ENCODE measurements at regions of chr17 and their contacts with region 1.

Region 1: DNA sequence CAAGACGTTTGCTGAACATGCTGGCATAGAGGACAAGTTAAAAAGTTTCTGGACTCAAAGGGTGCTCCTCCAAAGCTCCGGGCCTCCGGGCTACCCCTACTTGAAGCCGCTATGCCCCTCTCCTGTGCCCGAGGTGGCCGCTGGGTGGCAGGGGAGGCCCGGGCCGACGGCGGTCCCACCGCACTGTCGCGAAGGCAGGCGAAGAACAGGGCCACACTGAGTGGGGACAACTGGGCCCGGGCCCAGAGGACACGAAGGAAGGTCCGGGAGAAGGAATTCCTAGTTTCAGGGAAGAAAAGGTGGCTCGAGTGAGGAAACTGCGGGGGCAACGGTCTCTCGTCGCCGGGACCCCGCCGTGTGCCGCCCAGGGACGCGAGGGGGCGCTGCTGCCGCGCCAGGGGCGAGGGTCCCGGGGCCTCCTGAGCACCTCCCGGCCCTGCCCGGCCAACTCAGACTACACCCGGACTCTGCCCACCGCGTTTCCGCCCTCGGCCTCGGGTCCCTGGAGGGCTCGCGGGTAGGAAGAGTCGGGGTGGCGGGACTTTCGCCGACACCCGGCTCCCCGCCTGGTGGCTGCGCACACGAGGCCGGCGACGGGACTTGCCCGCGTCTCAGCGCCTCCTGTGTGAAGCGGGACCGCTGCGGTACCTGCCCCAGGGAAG is 885 bp upstream of the CHCT1 start:
- DNase-seq: peak; percentile 65 to 74 (median 70)
- ATAC-seq: peak; percentile 93
- H3K4me3 ChIP-seq: peak overlapping the region; percentile 1 to 17
- H3K27ac ChIP-seq: peak overlapping the region in 1 of 4 donors; percentile 24
- H3K4me1 ChIP-seq: peaks cover 10% of the 10 kb centered on the region
- H3K27me3 ChIP-seq: no peaks in the 10 kb centered on the region
- CTCF ChIP-seq: peak; percentile 72 to 99 (median 88)
- POLR2A ChIP-seq: peak in 1 of 3 donors; percentile 35

Region 2: GRCh38 chr17:60102632-60103096 is 318.7 kb before region 1 on chr17:
- intact Hi-C with region 1: loop called (anchors 10 kb)
- DNase-seq: peak in 1 of 4 donors; percentile 42
- ATAC-seq: no peak
- H3K4me3 ChIP-seq: no peak overlapping the region
- H3K27ac ChIP-seq: peak overlapping the region in 1 of 4 donors; percentile 27
- H3K4me1 ChIP-seq: no peaks in the 10 kb centered on the region
- H3K27me3 ChIP-seq: no peaks in the 10 kb centered on the region
- CTCF ChIP-seq: no peak
- POLR2A ChIP-seq: no peak

Region 3: DNA sequence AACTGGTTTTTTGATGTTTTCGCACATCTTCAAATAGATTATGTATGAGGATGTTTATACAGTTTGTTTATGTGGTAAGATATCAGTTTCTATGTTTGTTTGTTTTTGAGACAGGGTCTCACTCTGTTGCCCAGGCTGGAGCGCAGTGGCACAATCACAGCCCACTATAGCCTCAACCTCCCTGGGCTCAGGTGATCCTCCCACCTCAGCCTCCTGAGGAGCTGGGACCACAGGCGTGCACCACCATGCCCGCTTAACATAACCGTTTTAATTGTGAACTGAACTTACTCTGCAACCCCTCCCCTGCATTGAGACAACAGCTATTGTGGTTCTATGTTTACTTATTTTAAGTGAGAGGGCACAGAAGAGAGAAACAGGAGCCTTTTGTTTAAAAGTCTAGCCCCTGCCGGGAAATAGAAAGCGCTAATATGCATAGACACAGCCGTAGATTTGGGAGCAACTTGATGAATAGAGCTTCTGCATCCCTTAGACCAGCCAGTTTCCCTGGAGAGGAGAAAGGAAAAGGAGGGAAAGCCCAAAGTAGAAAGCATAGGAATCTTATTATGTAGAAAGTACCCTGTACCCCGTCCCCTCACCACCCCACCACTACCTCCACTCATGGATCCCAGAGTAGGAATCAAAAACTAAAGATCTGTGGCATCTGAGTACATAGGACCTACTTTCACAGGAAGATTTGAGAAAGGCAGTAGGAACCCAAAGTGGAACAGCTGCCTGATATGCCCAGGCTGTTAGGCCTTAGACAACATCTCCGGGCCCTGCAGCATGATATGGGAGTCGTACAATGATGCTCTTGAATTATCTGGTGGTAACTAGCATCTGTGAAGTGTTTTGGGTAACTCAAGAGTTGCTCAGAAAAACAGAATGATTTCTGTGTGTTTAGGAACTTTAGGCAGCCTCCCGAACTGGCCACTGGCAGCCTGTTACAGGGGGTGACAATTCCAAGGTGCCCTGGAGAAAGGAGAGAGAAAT is 124.4 kb after region 1 on chr17:
- intact Hi-C with region 1: no loop called
- DNase-seq: no peak
- ATAC-seq: no peak
- H3K4me3 ChIP-seq: no peak overlapping the region
- H3K27ac ChIP-seq: no peak overlapping the region
- H3K4me1 ChIP-seq: no peaks in the 10 kb centered on the region
- H3K27me3 ChIP-seq: no peaks in the 10 kb centered on the region
- CTCF ChIP-seq: no peak
- POLR2A ChIP-seq: no peak

Measured in body of pancreas (tissue), 4 donors.